BJ (cell line): ENCODE measurements at regions of chr3 and their contacts with region 1.

Region 1: DNA sequence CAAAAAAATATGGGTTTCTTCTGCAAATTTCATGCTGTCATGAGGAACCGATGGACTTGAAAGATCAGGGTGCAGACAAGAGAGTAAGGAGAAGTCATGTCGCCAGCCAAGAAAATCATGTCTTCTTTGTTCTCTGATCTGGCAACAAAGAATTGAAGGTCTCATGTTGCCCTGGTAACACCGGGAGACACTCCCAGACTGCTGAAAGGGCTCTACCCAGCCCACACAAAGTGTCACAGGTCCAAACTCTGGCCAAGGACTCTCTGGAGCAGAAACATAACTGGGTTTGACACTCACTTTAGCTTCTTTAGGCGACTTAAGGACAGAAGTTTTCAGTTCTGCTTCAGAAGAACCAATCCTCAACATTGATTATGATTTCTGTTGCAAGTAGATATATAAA is 42.9 kb downstream of the SIDT1 start:
- DNase-seq: no peak
- H3K4me3 ChIP-seq: no peak overlapping the region
- H3K27me3 ChIP-seq: peaks cover 8% of the 10 kb centered on the region
- CTCF ChIP-seq: no peak

Region 2: DNA sequence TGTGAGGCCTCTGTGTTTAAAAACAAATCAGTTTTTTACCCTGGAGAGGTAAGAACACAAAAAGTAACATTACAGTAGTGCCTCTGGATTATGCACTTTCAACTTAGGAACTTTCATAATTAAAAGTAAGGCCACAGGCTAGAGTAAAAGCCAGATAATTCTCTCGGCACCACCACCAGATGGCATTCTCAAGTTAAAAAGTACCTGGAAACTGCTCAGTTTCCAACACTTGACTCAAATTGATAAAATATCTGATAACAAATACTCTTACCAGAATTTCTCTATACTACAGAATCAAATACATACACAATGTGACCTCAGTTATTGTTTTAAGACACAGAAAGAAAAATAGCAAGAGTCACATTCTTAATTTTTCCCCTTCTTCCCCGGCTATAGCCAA is 80.2 kb before region 1 on chr3:
- CTCF ChIA-PET with region 1: interaction called, 28 read pairs
- POLR2A ChIA-PET with region 1: no interaction called
- DNase-seq: no peak
- H3K4me3 ChIP-seq: no peak overlapping the region
- H3K27me3 ChIP-seq: no peaks in the 10 kb centered on the region
- CTCF ChIP-seq: peak; percentile 46

Region 3: DNA sequence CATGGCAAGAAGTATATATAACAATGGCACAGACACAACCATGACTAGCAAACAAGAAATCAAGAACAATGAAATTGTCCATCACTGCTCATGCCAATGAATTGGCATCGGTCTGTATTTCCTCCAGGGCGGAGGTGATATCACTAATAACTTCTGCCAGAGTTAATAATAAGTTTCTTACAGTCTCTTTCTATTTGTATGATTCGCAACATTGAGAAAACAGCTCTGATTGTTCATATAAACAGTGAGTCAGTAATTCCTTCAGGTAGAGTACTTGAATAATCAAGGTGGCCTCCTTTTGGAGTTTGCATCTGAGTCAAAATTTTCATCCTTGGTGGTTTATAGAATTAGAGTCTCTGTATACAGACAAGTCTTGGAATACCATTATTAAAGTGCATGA is 52.0 kb before region 1 on chr3:
- CTCF ChIA-PET with region 1: no interaction called
- POLR2A ChIA-PET with region 1: no interaction called
- DNase-seq: no peak
- H3K4me3 ChIP-seq: no peak overlapping the region
- H3K27me3 ChIP-seq: no peaks in the 10 kb centered on the region
- CTCF ChIP-seq: no peak

Region 4: GRCh38 chr3:113589971-113590370 is 14.8 kb after region 1 on chr3:
- CTCF ChIA-PET with region 1: interaction called, 11 read pairs
- POLR2A ChIA-PET with region 1: no interaction called
- DNase-seq: no peak
- H3K4me3 ChIP-seq: no peak overlapping the region
- H3K27me3 ChIP-seq: no peaks in the 10 kb centered on the region; the same call in 1 of the 2 replicates
- CTCF ChIP-seq: no peak